Ovary (tissue), 10 donors: ENCODE measurements at regions of chr3 and their contacts with region 1.

Region 1: GRCh38 chr3:170414202-170414663 is 4.4 kb upstream of the CLDN11 start:
- DNase-seq: peak in 3 of 5 donors; percentile 49 to 63 (median 60)
- H3K4me3 ChIP-seq: no peak overlapping the region
- H3K27ac ChIP-seq: no peak overlapping the region
- H3K4me1 ChIP-seq: peaks cover 7% of the 10 kb centered on the region
- H3K27me3 ChIP-seq: no peaks in the 10 kb centered on the region
- CTCF ChIP-seq: peak; percentile 86 to 95 (median 89)
- EP300 ChIP-seq: no peak
- POLR2A ChIP-seq: no peak

Region 2: GRCh38 chr3:170180908-170181879 is 233.0 kb before region 1 on chr3 and contains the start of gene PHC3:
- intact Hi-C with region 1: loop called in 1 of 4 experiments (anchors 10 kb)
- DNase-seq: peak; percentile 90 to 95 (median 93)
- H3K4me3 ChIP-seq: peak within 1 kb of the TSS; percentile 75
- H3K27ac ChIP-seq: peak within 1 kb of the TSS; percentile 82 to 83
- H3K4me1 ChIP-seq: peaks cover 4% of the 10 kb centered on the region
- H3K27me3 ChIP-seq: no peaks in the 10 kb centered on the region
- CTCF ChIP-seq: peak in 2 of 3 donors; percentile 47 to 49
- EP300 ChIP-seq: no peak
- POLR2A ChIP-seq: peak; percentile 86
- total RNA-seq, gene PHC3: 43.3 to 121 (median 91.3) TPM

Region 3: DNA sequence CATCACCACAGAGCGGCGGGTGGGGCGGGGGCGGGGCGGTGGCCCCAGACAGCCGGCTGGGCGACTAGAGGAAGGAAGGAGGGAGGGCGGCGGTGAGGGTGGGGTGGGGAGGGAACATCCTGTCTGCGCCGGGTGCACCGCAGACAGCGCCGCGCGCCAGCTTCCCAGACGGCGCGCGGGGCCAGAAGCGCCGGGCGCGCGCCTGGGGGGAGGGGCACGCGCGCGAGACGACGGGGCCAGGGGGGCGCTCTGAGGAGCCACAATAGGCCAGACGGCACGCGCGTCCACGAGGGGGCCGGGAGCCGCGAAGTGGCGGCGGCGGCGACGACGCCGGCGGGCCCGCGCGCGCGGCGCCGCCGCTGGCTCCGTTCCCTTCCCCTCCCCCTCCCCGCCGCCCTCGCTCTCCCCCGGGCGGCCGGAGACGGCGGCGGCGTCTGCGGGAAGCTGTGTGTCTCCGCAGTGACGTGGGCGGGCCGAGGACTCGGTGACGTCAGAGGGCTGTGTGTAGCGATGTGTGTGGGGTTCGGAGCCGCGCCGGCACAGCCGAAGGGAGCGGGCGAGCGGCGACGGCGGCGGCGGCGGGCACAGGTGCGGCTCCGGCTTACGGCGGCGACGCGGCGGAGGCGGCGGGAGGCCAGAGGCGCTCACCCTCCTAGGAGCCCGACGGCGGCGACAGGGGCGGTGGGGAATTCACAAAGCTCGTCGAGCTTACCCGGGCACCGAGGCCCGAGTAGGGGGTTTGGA is 56.9 kb before region 1 on chr3 and contains the start of gene SKIL:
- intact Hi-C with region 1: loop called in 1 of 4 experiments (anchors 5 kb)
- DNase-seq: peak; percentile 96 to 98 (median 97)
- H3K4me3 ChIP-seq: peak within 1 kb of the TSS; percentile 79
- H3K27ac ChIP-seq: peak within 1 kb of the TSS; percentile 99 to 100
- H3K4me1 ChIP-seq: peaks cover 9% of the 10 kb centered on the region
- H3K27me3 ChIP-seq: no peaks in the 10 kb centered on the region
- CTCF ChIP-seq: peak in 2 of 3 donors; percentile 27 to 37
- EP300 ChIP-seq: no peak
- POLR2A ChIP-seq: peak; percentile 90
- total RNA-seq, gene SKIL: 39.3 to 57.8 (median 50.3) TPM

Region 4: DNA sequence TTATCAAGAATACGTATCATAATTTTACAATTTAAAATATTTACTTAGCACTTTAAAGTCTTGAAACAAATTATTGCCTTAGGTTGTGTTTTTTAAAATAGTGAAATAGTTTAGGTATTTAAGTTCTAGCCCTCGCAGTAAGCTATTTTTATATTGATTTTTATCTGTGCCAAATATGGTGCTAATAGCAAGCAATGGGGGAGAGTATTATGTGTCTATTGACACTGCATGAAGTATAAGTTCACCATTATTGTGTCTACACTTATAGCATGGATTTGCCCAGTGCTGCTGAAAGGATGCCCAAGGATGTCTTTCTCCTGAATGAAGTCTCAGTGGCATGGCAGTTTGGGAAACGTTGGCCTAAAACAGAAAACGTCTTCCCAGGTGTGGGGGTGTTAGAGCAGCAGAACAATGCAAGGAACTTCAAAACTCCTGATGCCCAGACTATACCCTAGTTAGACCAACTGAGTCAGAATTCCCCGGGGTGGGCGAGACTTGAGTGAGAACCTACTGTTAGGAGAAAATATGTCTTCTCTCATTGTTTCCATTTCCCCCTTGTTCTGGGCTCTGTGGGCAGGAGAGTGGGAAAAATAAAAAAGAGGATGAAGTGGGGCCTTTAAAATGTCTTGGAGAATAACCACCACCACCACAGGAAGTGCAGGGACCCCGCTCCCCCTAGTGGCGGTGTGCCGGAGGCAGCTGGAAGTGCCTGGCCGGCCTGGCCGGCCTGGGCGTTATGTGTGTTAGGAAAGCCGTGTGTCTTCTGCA is 275.8 kb after region 1 on chr3:
- intact Hi-C with region 1: loop called in 3 of 4 experiments (anchors 5 to 10 kb)
- DNase-seq: peak; percentile 66 to 85 (median 73)
- H3K4me3 ChIP-seq: no peak overlapping the region
- H3K27ac ChIP-seq: no peak overlapping the region
- H3K4me1 ChIP-seq: peaks cover 1% of the 10 kb centered on the region
- H3K27me3 ChIP-seq: no peaks in the 10 kb centered on the region
- CTCF ChIP-seq: peak in 2 of 3 donors; percentile 36 to 61
- EP300 ChIP-seq: no peak
- POLR2A ChIP-seq: no peak

Region 5: GRCh38 chr3:170740726-170741591 is 326.7 kb after region 1 on chr3:
- intact Hi-C with region 1: loop called in 1 of 4 experiments (anchors 10 kb)
- DNase-seq: peak; percentile 53 to 80 (median 64)
- H3K4me3 ChIP-seq: no peak overlapping the region
- H3K27ac ChIP-seq: peak overlapping the region; percentile 14 to 83
- H3K4me1 ChIP-seq: peaks cover 5% of the 10 kb centered on the region
- H3K27me3 ChIP-seq: no peaks in the 10 kb centered on the region
- CTCF ChIP-seq: no peak
- EP300 ChIP-seq: no peak
- POLR2A ChIP-seq: no peak

Region 6: GRCh38 chr3:170848292-170848917 is 434.2 kb after region 1 on chr3:
- intact Hi-C with region 1: loop called in 1 of 4 experiments (anchors 10 kb)
- DNase-seq: no peak
- H3K4me3 ChIP-seq: no peak overlapping the region
- H3K27ac ChIP-seq: no peak overlapping the region
- H3K4me1 ChIP-seq: no peaks in the 10 kb centered on the region
- H3K27me3 ChIP-seq: no peaks in the 10 kb centered on the region
- CTCF ChIP-seq: peak in 1 of 3 donors; percentile 29
- EP300 ChIP-seq: no peak
- POLR2A ChIP-seq: no peak